Dorsolateral prefrontal cortex (tissue), 120 donors: ENCODE measurements at regions of chr11 and their contacts with region 1.

Region 1: GRCh38 chr11:126989942-126990715 is 10.4 kb downstream of the KIRREL3 start:
- DNase-seq: peak; percentile 83 to 90 (median 88)
- H3K4me3 ChIP-seq: peak overlapping the region in 53 of 59 donors; percentile 14 to 62 (median 37)
- H3K27ac ChIP-seq: peak overlapping the region in 49 of 59 donors; percentile 2 to 94 (median 65)
- H3K27me3 ChIP-seq: no peaks in the 10 kb centered on the region
- CTCF ChIP-seq: peak; percentile 67 to 99 (median 94)

Region 2: DNA sequence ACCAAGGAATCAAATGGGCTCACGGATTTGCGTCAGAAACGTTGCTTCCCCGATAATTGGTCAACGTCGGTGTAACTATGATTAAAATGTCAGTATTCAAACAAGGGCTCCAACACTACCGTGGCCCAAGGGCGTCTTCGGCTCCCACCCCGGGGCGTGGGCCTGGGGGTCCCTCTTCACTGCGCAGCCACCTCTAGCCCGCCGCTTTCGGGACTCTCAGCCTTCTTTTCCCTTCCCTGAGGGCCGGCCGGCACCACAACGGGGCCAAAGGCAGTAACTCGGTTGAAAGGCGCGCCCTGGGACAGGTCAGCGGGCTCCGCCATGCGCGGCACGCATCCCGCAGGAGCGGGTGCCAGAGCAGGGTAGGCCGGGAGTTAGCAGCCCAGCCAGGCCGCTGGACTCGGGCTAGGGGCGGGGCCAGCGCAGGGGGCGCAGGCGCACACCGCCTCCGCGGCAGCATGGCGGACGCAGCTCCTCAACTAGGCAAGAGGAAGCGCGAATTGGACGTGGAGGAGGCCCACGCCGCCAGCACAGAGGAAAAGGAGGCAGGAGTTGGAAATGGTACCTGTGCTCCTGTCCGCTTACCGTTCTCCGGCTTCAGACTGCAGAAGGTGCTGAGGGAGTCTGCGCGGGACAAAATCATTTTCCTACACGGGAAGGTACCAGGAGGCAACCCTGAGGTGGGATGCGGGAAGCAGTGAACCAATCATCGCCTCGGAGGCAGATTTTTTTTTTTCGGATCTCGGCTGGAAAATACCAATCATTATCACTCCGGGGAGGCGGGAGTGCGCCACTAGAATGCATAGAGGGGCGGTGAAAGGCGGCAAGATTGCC is 686.3 kb before region 1 on chr11 and contains the start of gene DCPS:
- intact Hi-C with region 1: loop called (anchors 10 kb)
- DNase-seq: peak; percentile 83 to 97 (median 90)
- H3K4me3 ChIP-seq: peak within 1 kb of the TSS; percentile 63 to 94 (median 79)
- H3K27ac ChIP-seq: peak within 1 kb of the TSS; percentile 70 to 98 (median 90)
- H3K27me3 ChIP-seq: no peaks in the 10 kb centered on the region
- CTCF ChIP-seq: peak in 29 of 56 donors; percentile 3 to 59 (median 23)
- total RNA-seq, gene DCPS: 5.5 to 17.5 (median 10.9) TPM

Region 3: DNA sequence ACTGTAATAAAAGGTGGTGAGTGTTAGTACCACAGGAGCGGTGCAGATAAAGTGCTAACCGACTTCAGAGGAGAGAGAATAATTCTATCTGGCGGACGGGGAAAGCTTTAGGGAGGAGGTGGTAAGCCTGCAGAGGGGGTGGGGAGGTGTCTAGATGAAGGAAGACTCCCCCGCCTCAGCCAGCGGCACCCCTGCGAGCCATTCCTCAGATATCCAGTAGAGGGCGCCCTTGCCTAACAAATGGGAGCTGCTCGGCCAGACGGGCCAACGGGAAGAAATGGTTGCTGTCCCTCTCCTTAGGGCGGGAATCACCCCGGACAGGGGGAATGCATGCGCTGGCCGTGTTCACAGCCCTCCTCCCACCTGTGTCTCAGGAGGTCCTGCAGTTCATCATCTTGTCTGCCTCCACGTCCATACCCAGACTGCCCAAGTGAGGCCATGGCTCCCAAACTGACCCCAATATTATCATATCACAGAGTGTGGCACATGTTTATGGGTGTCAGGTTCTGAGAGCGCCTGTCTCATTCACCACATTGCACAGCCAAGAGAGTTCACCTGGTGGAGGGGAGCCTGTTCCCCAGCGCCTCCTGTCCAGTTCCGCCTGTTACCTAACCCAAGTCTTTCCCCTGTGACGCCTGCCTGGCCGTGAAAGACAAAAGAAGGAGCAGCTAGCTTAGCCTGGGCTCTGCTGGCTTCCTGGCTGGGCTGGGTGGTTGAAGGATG is 549.2 kb before region 1 on chr11:
- intact Hi-C with region 1: loop called (anchors 5 to 10 kb)
- DNase-seq: peak; percentile 67 to 89 (median 81)
- H3K4me3 ChIP-seq: peak overlapping the region in 3 of 59 donors; percentile 2 to 18 (median 16)
- H3K27ac ChIP-seq: peak overlapping the region in 6 of 59 donors; percentile 9 to 65 (median 30)
- H3K27me3 ChIP-seq: no peaks in the 10 kb centered on the region
- CTCF ChIP-seq: peak; percentile 90 to 99 (median 98)

Region 4: GRCh38 chr11:126607374-126607773 is 382.8 kb before region 1 on chr11:
- intact Hi-C with region 1: loop called in 1 of 2 experiments (anchors 5 kb)
- DNase-seq: peak in 9 of 10 donors; percentile 63 to 83 (median 75)
- H3K4me3 ChIP-seq: peak overlapping the region in 2 of 59 donors; percentile 20 to 32
- H3K27ac ChIP-seq: peak overlapping the region in 19 of 59 donors; percentile 4 to 70 (median 21)
- H3K27me3 ChIP-seq: no peaks in the 10 kb centered on the region
- CTCF ChIP-seq: peak; percentile 26 to 92 (median 83)

Region 5: GRCh38 chr11:126716456-126717083 is 273.6 kb before region 1 on chr11:
- intact Hi-C with region 1: loop called (anchors 2 to 5 kb)
- DNase-seq: peak in 7 of 10 donors; percentile 37 to 80 (median 63)
- H3K4me3 ChIP-seq: no peak overlapping the region
- H3K27ac ChIP-seq: peak overlapping the region in 9 of 59 donors; percentile 1 to 61 (median 35)
- H3K27me3 ChIP-seq: no peaks in the 10 kb centered on the region
- CTCF ChIP-seq: peak; percentile 11 to 81 (median 66)

Region 6: GRCh38 chr11:126790550-126791081 is 199.5 kb before region 1 on chr11:
- intact Hi-C with region 1: loop called in 1 of 2 experiments (anchors 5 kb)
- DNase-seq: peak in 9 of 10 donors; percentile 48 to 75 (median 69)
- H3K4me3 ChIP-seq: peak overlapping the region in 1 of 59 donors; percentile 17
- H3K27ac ChIP-seq: peak overlapping the region in 50 of 59 donors; percentile 0 to 77 (median 52)
- H3K27me3 ChIP-seq: no peaks in the 10 kb centered on the region
- CTCF ChIP-seq: peak in 52 of 56 donors; percentile 22 to 78 (median 46)

Region 7: DNA sequence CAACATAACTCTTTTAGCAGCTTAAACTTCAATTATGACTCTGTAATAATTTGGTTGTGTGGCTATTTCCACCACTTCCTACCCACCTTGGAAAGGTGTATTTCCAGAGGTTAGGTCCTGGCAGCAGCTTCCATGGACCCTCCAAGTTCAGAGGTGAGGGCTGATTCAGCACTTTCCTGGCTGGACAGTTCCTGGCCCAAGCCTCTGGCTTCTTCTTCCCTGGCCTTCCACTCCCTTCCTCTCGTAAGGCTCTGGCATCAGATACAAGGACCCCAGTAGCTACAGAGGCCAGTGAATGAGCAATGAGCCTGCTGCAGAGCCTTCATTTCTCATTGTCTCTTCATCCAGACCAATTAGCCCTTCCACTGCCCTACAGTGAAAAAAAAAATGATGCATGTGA is 108.6 kb after region 1 on chr11:
- intact Hi-C with region 1: no loop called
- DNase-seq: no peak
- H3K4me3 ChIP-seq: no peak overlapping the region
- H3K27ac ChIP-seq: no peak overlapping the region
- H3K27me3 ChIP-seq: peaks cover 0 to 3% (median 0%) of the 10 kb centered on the region in 45 donors
- CTCF ChIP-seq: no peak